Naive thymus-derived CD4-positive, alpha-beta T cell (primary cell): ENCODE measurements at regions of chr2 and their contacts with region 1.

Region 1: GRCh38 chr2:85602476-85603234 is at the start of gene TMEM150A:
- DNase-seq: peak; percentile 68 to 91 (median 78)
- ATAC-seq: peak; percentile 97
- H3K4me3 ChIP-seq: peak within 1 kb of the TSS; percentile 99
- H3K4me3 Mint-ChIP-seq: peak within 1 kb of the TSS; percentile 89 to 98 (median 91)
- H3K27ac ChIP-seq: peak within 1 kb of the TSS; percentile 81
- H3K27ac Mint-ChIP-seq: peak within 1 kb of the TSS; percentile 42 to 96 (median 82)
- H3K4me1 ChIP-seq: peaks cover 7 to 9% of the 10 kb centered on the region in 2 donors
- H3K4me1 Mint-ChIP-seq: peaks cover 16 to 45% (median 37%) of the 10 kb centered on the region in 7 donors
- H3K27me3 ChIP-seq: no peaks in the 10 kb centered on the region
- H3K27me3 Mint-ChIP-seq: peaks cover 0 to 2% (median 0%) of the 10 kb centered on the region in 5 donors
- total RNA-seq, gene TMEM150A: 5.1 to 17.8 (median 11.2) TPM

Region 2: GRCh38 chr2:85577386-85578242 is 25.0 kb before region 1 on chr2 and contains the start of gene VAMP8:
- CTCF ChIA-PET with region 1: no interaction called
- POLR2A ChIA-PET with region 1: interaction called, 8 read pairs
- intact Hi-C with region 1: loop called in 1 of 2 experiments (anchors 1 kb)
- DNase-seq: peak in 8 of 9 donors; percentile 43 to 61 (median 46)
- ATAC-seq: peak; percentile 82
- H3K4me3 ChIP-seq: peak within 1 kb of the TSS; percentile 78
- H3K4me3 Mint-ChIP-seq: peak within 1 kb of the TSS; percentile 89 to 96 (median 92)
- H3K27ac ChIP-seq: peak within 1 kb of the TSS; percentile 86
- H3K27ac Mint-ChIP-seq: peak within 1 kb of the TSS; percentile 74 to 99 (median 94)
- H3K4me1 ChIP-seq: peaks cover 12 to 28% of the 10 kb centered on the region in 2 donors
- H3K4me1 Mint-ChIP-seq: peaks cover 28 to 47% (median 39%) of the 10 kb centered on the region in 7 donors
- H3K27me3 ChIP-seq: no peaks in the 10 kb centered on the region
- H3K27me3 Mint-ChIP-seq: peaks cover 0 to 2% (median 0%) of the 10 kb centered on the region in 5 donors
- total RNA-seq, gene VAMP8: 55.1 to 137 (median 83.2) TPM

Region 3: GRCh38 chr2:85584857-85585783 is 17.5 kb before region 1 on chr2:
- CTCF ChIA-PET with region 1: interaction called, 3 read pairs
- POLR2A ChIA-PET with region 1: interaction called, 13 read pairs
- intact Hi-C with region 1: loop called (anchors 1 to 2 kb)
- DNase-seq: peak in 4 of 9 donors; percentile 22 to 40 (median 30)
- ATAC-seq: peak; percentile 47
- H3K4me3 ChIP-seq: peak overlapping the region; percentile 69
- H3K4me3 Mint-ChIP-seq: peak overlapping the region; percentile 79 to 96 (median 88)
- H3K27ac ChIP-seq: peak overlapping the region; percentile 80
- H3K27ac Mint-ChIP-seq: peak overlapping the region; percentile 81 to 93 (median 93)
- H3K4me1 ChIP-seq: peaks cover 19 to 35% of the 10 kb centered on the region in 2 donors
- H3K4me1 Mint-ChIP-seq: peaks cover 47 to 73% (median 65%) of the 10 kb centered on the region in 7 donors
- H3K27me3 ChIP-seq: no peaks in the 10 kb centered on the region
- H3K27me3 Mint-ChIP-seq: no peaks in the 10 kb centered on the region

Region 4: GRCh38 chr2:85589982-85590791 is 12.5 kb before region 1 on chr2:
- CTCF ChIA-PET with region 1: no interaction called
- POLR2A ChIA-PET with region 1: interaction called, 35 read pairs
- intact Hi-C with region 1: loop called (anchors 1 to 2 kb)
- DNase-seq: no peak
- ATAC-seq: no peak
- H3K4me3 ChIP-seq: no peak overlapping the region
- H3K4me3 Mint-ChIP-seq: peak overlapping the region in 1 of 10 donors; percentile 69
- H3K27ac ChIP-seq: no peak overlapping the region
- H3K27ac Mint-ChIP-seq: peak overlapping the region in 5 of 9 donors; percentile 17 to 59 (median 23)
- H3K4me1 ChIP-seq: peaks cover 14 to 26% of the 10 kb centered on the region in 2 donors
- H3K4me1 Mint-ChIP-seq: peaks cover 39 to 65% (median 49%) of the 10 kb centered on the region in 7 donors
- H3K27me3 ChIP-seq: no peaks in the 10 kb centered on the region
- H3K27me3 Mint-ChIP-seq: no peaks in the 10 kb centered on the region